Activated B cell treated with CpG ODN at 0.5 μM for 24 hours (primary cell): ENCODE measurements at regions of chr6 and their contacts with region 1.

Region 1: GRCh38 chr6:69835414-69836179 is 30.8 kb upstream of the COL19A1 start:
- DNase-seq: no peak
- ATAC-seq: peak; percentile 88
- H3K4me3 Mint-ChIP-seq: no peak overlapping the region
- H3K27ac Mint-ChIP-seq: peak overlapping the region; percentile 57
- H3K4me1 Mint-ChIP-seq: peaks cover 20% of the 10 kb centered on the region
- H3K27me3 Mint-ChIP-seq: no peaks in the 10 kb centered on the region
- CTCF ChIP-seq: peak; percentile 81

Region 2: GRCh38 chr6:69796642-69797390 is 38.8 kb before region 1 on chr6 and contains the start of gene LMBRD1:
- CTCF ChIA-PET with region 1: interaction called, 7 read pairs
- POLR2A ChIA-PET with region 1: no interaction called
- intact Hi-C with region 1: loop called (anchors 1 kb)
- DNase-seq: peak; percentile 100
- ATAC-seq: peak; percentile 81
- H3K4me3 Mint-ChIP-seq: peak within 1 kb of the TSS; percentile 95
- H3K27ac Mint-ChIP-seq: peak within 1 kb of the TSS; percentile 97
- H3K4me1 Mint-ChIP-seq: peaks cover 47% of the 10 kb centered on the region
- H3K27me3 Mint-ChIP-seq: no peaks in the 10 kb centered on the region
- CTCF ChIP-seq: peak; percentile 53
- total RNA-seq, gene LMBRD1: 46.9 and 51.3 TPM in 2 replicates

Region 3: GRCh38 chr6:69881322-69882151 is 45.9 kb after region 1 on chr6:
- CTCF ChIA-PET with region 1: no interaction called
- POLR2A ChIA-PET with region 1: no interaction called
- intact Hi-C with region 1: loop called (anchors 1 kb)
- DNase-seq: no peak
- ATAC-seq: peak; percentile 87
- H3K4me3 Mint-ChIP-seq: peak overlapping the region; percentile 79
- H3K27ac Mint-ChIP-seq: peak overlapping the region; percentile 99
- H3K4me1 Mint-ChIP-seq: peaks cover 77% of the 10 kb centered on the region
- H3K27me3 Mint-ChIP-seq: no peaks in the 10 kb centered on the region
- CTCF ChIP-seq: no peak

Region 4: GRCh38 chr6:69985180-69985579 is 149.6 kb after region 1 on chr6:
- CTCF ChIA-PET with region 1: no interaction called
- POLR2A ChIA-PET with region 1: no interaction called
- intact Hi-C with region 1: loop called (anchors 1 kb)
- DNase-seq: no peak
- ATAC-seq: peak; percentile 42
- H3K4me3 Mint-ChIP-seq: no peak overlapping the region
- H3K27ac Mint-ChIP-seq: peak overlapping the region; percentile 46
- H3K4me1 Mint-ChIP-seq: peaks cover 36% of the 10 kb centered on the region
- H3K27me3 Mint-ChIP-seq: no peaks in the 10 kb centered on the region
- CTCF ChIP-seq: no peak

Region 5: DNA sequence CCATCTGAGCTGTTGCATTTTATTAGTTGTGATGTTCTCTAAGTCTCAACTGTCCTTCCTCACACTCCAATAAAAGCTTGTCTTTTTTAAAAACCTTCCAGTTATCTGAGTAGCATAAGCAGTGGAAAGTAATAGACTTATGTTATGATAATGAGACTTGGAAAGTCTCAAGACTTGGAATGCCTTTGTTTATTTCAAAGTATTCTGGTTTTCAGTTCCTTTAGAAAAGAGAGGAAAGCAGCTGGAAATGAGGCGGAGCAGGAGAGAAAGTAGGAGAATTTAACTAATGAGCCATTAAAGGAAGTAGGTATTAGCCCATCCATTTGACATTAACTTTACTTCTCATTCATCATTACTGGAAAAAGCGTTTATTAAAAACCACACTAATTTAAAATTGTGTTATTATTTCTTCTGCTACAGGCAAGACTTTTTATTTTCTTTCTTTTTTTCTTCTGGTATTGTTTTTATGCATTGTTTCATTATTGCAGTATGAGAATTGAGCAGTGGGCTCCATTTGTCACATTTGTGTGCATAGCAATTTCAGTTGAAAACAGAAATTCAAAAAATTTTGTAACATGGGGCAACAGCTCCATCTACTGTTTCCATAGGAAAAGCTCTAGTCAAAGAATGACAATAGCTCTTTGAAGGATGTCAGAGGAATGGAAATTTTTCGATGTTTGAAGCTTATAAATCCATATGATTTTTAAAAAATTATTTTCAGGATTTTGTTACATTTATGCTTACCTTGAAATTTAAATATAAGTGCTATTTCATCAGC is 272.4 kb after region 1 on chr6:
- CTCF ChIA-PET with region 1: interaction called, 38 read pairs
- POLR2A ChIA-PET with region 1: no interaction called
- intact Hi-C with region 1: loop called (anchors 1 kb)
- DNase-seq: no peak
- ATAC-seq: no peak
- H3K4me3 Mint-ChIP-seq: no peak overlapping the region
- H3K27ac Mint-ChIP-seq: no peak overlapping the region
- H3K4me1 Mint-ChIP-seq: peaks cover 8% of the 10 kb centered on the region
- H3K27me3 Mint-ChIP-seq: no peaks in the 10 kb centered on the region
- CTCF ChIP-seq: peak; percentile 80